Activated B cell treated with CpG ODN at 0.5 μM for 24 hours (primary cell): ENCODE measurements at regions of chr20 and their contacts with region 1.

Region 1: DNA sequence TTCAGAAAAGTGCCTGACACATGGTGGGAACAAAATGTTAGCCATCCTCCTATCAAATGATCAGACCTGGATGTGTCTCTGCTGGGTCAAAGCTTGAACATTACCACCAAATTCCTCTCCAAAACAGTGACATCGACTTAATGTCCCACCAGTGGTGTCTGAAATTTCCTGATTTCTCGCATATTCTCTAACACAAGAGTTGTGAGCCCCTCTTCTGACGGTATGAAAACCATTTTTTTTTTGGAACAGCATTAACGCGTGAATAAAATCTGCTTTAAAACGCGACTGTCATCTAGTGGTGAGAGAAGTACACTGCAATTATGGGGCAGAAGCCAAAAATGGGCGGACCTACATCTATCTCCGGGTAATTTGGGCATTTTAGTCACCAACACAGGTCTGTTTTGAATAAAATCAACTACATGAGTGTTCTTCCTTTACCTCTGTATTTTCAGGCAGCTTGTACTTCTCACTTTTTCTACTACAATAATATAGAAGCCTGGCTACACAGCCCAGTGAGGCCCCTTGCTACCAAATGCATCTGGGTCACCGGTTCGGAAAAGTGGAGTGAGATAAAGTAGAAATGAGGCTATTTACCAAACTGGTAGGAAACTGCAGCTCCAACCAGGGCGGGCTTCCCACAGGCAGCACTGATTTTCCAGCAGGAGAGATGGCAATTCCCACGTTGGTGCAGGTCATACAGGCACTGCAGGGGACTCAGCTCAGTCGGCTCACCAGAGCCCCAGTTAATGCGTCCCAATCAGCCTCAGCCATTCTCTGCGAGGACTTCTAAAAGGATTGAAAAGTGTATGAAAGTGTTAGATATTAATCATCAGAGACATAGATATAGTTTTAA is 27.4 kb downstream of the MGME1 start:
- DNase-seq: no peak
- ATAC-seq: peak; percentile 91
- H3K4me3 Mint-ChIP-seq: no peak overlapping the region
- H3K27ac Mint-ChIP-seq: peak overlapping the region; percentile 20
- H3K4me1 Mint-ChIP-seq: peaks cover 29% of the 10 kb centered on the region
- H3K27me3 Mint-ChIP-seq: no peaks in the 10 kb centered on the region
- CTCF ChIP-seq: peak; percentile 89

Region 2: DNA sequence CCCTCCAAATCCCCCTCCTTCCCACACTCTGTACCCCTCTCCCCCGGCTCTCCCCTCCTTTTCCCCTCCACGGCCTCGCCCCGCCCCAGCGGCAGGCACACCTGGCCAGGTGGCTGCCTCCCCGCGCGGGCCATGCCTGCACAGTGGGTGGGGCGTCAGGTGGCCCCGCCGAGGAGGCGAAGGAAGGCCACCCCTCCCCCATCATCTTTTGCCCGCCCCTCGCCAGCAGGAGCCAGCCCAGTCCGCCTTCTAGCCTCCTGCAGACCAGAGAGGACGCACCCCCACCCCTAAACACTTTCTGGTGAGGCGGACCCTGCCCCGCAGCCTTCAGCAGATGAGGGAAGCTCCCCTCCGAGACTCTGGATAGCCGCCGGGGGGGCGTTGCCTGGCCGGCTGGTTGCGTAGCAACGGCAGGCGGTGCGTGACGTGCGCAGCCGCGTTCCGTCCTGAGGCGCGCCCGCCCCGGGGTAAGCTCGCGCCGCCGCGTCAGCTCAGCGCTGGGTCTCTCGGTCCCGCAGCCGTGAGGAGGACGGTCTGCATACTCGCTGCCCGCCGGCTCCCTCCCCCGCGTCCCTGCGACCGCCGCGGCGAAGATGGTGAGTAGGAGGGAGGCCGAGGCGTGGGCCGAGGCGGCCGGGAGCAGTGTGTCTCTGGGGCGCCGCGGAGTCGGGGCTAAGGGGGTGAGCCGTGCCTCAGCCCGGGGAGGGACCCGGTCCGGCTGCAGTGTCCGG is 426.4 kb before region 1 on chr20 and contains the start of gene DSTN:
- CTCF ChIA-PET with region 1: no interaction called
- POLR2A ChIA-PET with region 1: interaction called, 3 read pairs
- intact Hi-C with region 1: loop called (anchors 1 kb)
- DNase-seq: peak; percentile 88
- ATAC-seq: peak; percentile 89
- H3K4me3 Mint-ChIP-seq: peak within 1 kb of the TSS; percentile 93
- H3K27ac Mint-ChIP-seq: peak within 1 kb of the TSS; percentile 85
- H3K4me1 Mint-ChIP-seq: peaks cover 16% of the 10 kb centered on the region
- H3K27me3 Mint-ChIP-seq: peaks cover 2% of the 10 kb centered on the region
- CTCF ChIP-seq: no peak
- total RNA-seq, gene DSTN: 14.4 and 20.1 TPM in 2 replicates

Region 3: DNA sequence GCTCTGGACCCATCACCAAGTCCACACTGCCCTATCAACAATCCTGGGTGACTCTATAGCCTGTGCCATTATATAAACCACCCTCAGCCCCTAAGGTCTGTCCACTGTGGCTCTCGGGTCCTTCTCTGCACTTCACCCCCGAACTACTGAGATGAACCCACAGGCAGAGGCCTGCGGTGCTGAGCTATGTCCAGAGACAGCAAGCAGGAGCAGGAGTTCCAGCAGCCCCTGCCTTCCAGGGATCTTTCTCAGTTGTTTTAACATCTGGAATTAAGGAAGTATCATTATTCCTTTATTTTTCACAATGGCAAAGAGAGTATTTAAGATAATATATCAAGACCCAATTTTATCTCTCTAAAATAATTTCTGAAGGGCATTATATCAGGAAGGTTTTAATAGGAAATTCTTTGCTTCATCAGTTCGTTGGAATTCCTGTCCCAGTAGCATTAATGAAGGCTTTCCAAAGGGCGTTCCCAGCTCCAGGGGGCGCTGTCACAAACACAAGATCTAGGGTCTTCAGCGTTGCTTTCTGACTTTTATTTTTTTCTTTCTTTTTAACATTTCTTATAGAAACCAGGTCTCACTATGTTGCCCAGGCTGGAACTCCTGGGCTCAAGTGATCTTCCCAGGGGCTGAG is 341.4 kb before region 1 on chr20:
- CTCF ChIA-PET with region 1: no interaction called
- POLR2A ChIA-PET with region 1: no interaction called
- intact Hi-C with region 1: loop called (anchors 1 kb)
- DNase-seq: no peak
- ATAC-seq: no peak
- H3K4me3 Mint-ChIP-seq: no peak overlapping the region
- H3K27ac Mint-ChIP-seq: no peak overlapping the region
- H3K4me1 Mint-ChIP-seq: peaks cover 6% of the 10 kb centered on the region
- H3K27me3 Mint-ChIP-seq: no peaks in the 10 kb centered on the region
- CTCF ChIP-seq: no peak

Region 4: GRCh38 chr20:17898548-17898994 is 97.6 kb before region 1 on chr20:
- CTCF ChIA-PET with region 1: interaction called, 3 read pairs
- POLR2A ChIA-PET with region 1: no interaction called
- intact Hi-C with region 1: loop called (anchors 1 kb)
- DNase-seq: no peak
- ATAC-seq: peak; percentile 78
- H3K4me3 Mint-ChIP-seq: no peak overlapping the region
- H3K27ac Mint-ChIP-seq: no peak overlapping the region
- H3K4me1 Mint-ChIP-seq: peaks cover 53% of the 10 kb centered on the region
- H3K27me3 Mint-ChIP-seq: peaks cover 16% of the 10 kb centered on the region
- CTCF ChIP-seq: peak; percentile 93

Region 5: GRCh38 chr20:17958373-17959256 is 37.6 kb before region 1 on chr20:
- CTCF ChIA-PET with region 1: no interaction called
- POLR2A ChIA-PET with region 1: interaction called, 5 read pairs
- intact Hi-C with region 1: loop called (anchors 5 kb)
- DNase-seq: no peak
- ATAC-seq: no peak
- H3K4me3 Mint-ChIP-seq: peak overlapping the region; percentile 57
- H3K27ac Mint-ChIP-seq: peak overlapping the region; percentile 90
- H3K4me1 Mint-ChIP-seq: peaks cover 94% of the 10 kb centered on the region
- H3K27me3 Mint-ChIP-seq: no peaks in the 10 kb centered on the region
- CTCF ChIP-seq: no peak

Region 6: DNA sequence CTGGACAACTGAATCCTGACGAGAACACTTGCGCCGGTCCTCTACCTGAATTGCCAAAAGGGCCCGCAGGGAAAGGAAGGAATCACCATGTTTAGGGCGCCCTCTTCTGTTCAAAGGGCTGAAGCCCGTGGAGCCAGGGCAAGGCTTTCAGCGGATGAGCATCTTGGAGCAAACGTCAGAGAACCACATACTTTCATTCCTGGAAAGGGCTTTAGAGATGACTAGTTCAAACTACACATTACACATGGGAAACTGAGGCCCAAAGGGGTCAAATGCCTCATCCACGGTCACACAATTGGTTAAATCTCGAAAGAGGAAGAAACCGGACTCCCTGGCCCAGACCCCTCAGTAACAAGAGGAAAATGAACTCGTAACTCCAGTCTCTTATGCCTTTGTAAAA is 280.6 kb after region 1 on chr20:
- CTCF ChIA-PET with region 1: no interaction called
- POLR2A ChIA-PET with region 1: no interaction called
- intact Hi-C with region 1: loop called (anchors 2 kb)
- DNase-seq: peak; percentile 21
- ATAC-seq: peak; percentile 66
- H3K4me3 Mint-ChIP-seq: no peak overlapping the region
- H3K27ac Mint-ChIP-seq: no peak overlapping the region
- H3K4me1 Mint-ChIP-seq: no peaks in the 10 kb centered on the region
- H3K27me3 Mint-ChIP-seq: peaks cover 37% of the 10 kb centered on the region
- CTCF ChIP-seq: no peak